CD8-positive, alpha-beta memory T cell (primary cell): ENCODE measurements at regions of chr5 and their contacts with region 1.

Region 1: GRCh38 chr5:96926276-96926675 is 9.6 kb upstream of the LNPEP start:
- DNase-seq: no peak
- H3K4me3 ChIP-seq: no peak overlapping the region
- H3K4me3 Mint-ChIP-seq: no peak overlapping the region
- H3K27ac ChIP-seq: no peak overlapping the region
- H3K27ac Mint-ChIP-seq: peak overlapping the region in 1 of 8 donors; percentile 54
- H3K4me1 ChIP-seq: peaks cover 33% of the 10 kb centered on the region
- H3K4me1 Mint-ChIP-seq: peaks cover 27 to 50% (median 43%) of the 10 kb centered on the region in 3 donors
- H3K27me3 ChIP-seq: no peaks in the 10 kb centered on the region
- H3K27me3 Mint-ChIP-seq: no peaks in the 10 kb centered on the region

Region 2: GRCh38 chr5:96641368-96642228 is 284.7 kb before region 1 on chr5:
- CTCF ChIA-PET with region 1: no interaction called
- POLR2A ChIA-PET with region 1: no interaction called
- DNase-seq: no peak
- H3K4me3 ChIP-seq: no peak overlapping the region
- H3K4me3 Mint-ChIP-seq: no peak overlapping the region
- H3K27ac ChIP-seq: no peak overlapping the region
- H3K27ac Mint-ChIP-seq: peak overlapping the region in 4 of 8 donors; percentile 30 to 78 (median 49)
- H3K4me1 ChIP-seq: no peaks in the 10 kb centered on the region
- H3K4me1 Mint-ChIP-seq: peaks cover 0 to 6% (median 6%) of the 10 kb centered on the region in 3 donors
- H3K27me3 ChIP-seq: no peaks in the 10 kb centered on the region
- H3K27me3 Mint-ChIP-seq: no peaks in the 10 kb centered on the region

Region 3: DNA sequence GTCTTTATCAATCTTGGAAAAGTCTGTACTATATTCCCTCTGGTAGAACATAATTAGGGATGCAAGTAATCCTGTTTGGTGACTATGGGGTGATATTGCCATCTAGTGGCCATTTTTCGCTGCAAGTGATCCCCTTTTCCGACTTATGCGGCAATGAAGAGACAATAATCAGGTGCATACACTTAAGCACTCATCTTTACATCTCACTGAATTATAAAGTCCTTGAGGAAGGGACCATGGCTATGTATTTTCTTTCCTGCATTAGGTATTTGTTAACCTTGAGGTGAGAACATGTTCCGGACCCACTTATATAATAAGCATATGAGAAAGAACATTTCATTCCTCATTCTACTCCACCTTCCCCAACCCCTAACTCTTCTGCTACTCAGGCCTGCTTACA is 235.8 kb after region 1 on chr5:
- CTCF ChIA-PET with region 1: no interaction called
- POLR2A ChIA-PET with region 1: interaction called, 10 read pairs
- DNase-seq: peak; percentile 12 to 62 (median 46)
- H3K4me3 ChIP-seq: no peak overlapping the region
- H3K4me3 Mint-ChIP-seq: no peak overlapping the region
- H3K27ac ChIP-seq: no peak overlapping the region
- H3K27ac Mint-ChIP-seq: peak overlapping the region in 2 of 8 donors; percentile 31 to 71
- H3K4me1 ChIP-seq: no peaks in the 10 kb centered on the region
- H3K4me1 Mint-ChIP-seq: peaks cover 3 to 10% (median 8%) of the 10 kb centered on the region in 3 donors
- H3K27me3 ChIP-seq: no peaks in the 10 kb centered on the region
- H3K27me3 Mint-ChIP-seq: peaks cover 5% of the 10 kb centered on the region in 2 donors